ENCODE measurements at regions of chr14 and their contacts with region 1.

Region 1: GRCh38 chr14:57390028-57390805 is at the start of gene NAA30:
- DNase-seq: peak; percentile 96
- ATAC-seq: peak; percentile 95
- H3K4me3 ChIP-seq: peak within 1 kb of the TSS; percentile 71 to 97 (median 81)
- H3K4me3 Mint-ChIP-seq: peak within 1 kb of the TSS; percentile 88
- H3K27ac ChIP-seq: peak within 1 kb of the TSS; percentile 82 to 89
- H3K27ac Mint-ChIP-seq: peak within 1 kb of the TSS; percentile 87
- H3K4me1 ChIP-seq: peaks cover 19 to 28% of the 10 kb centered on the region in 2 donors
- H3K4me1 Mint-ChIP-seq: peaks cover 42% of the 10 kb centered on the region
- H3K27me3 ChIP-seq: no peaks in the 10 kb centered on the region
- H3K27me3 Mint-ChIP-seq: peaks cover 2% of the 10 kb centered on the region
- CTCF ChIP-seq: no peak
- total RNA-seq, gene NAA30: 13.3 and 14.7 TPM in 2 replicates

Region 2: GRCh38 chr14:55411426-55412389 is 1978.5 kb before region 1 on chr14 and contains the start of gene ATG14:
- CTCF ChIA-PET with region 1: no interaction called
- POLR2A ChIA-PET with region 1: no interaction called
- intact Hi-C with region 1: loop called (anchors 5 kb)
- DNase-seq: peak; percentile 81
- ATAC-seq: peak; percentile 99
- H3K4me3 ChIP-seq: peak within 1 kb of the TSS; percentile 62 to 95 (median 93)
- H3K4me3 Mint-ChIP-seq: peak within 1 kb of the TSS; percentile 93
- H3K27ac ChIP-seq: peak within 1 kb of the TSS; percentile 49 to 87
- H3K27ac Mint-ChIP-seq: peak within 1 kb of the TSS; percentile 87
- H3K4me1 ChIP-seq: peaks cover 16 to 17% of the 10 kb centered on the region in 2 donors
- H3K4me1 Mint-ChIP-seq: peaks cover 35% of the 10 kb centered on the region
- H3K27me3 ChIP-seq: no peaks in the 10 kb centered on the region
- H3K27me3 Mint-ChIP-seq: peaks cover 19% of the 10 kb centered on the region
- CTCF ChIP-seq: no peak
- total RNA-seq, gene ATG14: 15.5 and 17.0 TPM in 2 replicates

Region 3: DNA sequence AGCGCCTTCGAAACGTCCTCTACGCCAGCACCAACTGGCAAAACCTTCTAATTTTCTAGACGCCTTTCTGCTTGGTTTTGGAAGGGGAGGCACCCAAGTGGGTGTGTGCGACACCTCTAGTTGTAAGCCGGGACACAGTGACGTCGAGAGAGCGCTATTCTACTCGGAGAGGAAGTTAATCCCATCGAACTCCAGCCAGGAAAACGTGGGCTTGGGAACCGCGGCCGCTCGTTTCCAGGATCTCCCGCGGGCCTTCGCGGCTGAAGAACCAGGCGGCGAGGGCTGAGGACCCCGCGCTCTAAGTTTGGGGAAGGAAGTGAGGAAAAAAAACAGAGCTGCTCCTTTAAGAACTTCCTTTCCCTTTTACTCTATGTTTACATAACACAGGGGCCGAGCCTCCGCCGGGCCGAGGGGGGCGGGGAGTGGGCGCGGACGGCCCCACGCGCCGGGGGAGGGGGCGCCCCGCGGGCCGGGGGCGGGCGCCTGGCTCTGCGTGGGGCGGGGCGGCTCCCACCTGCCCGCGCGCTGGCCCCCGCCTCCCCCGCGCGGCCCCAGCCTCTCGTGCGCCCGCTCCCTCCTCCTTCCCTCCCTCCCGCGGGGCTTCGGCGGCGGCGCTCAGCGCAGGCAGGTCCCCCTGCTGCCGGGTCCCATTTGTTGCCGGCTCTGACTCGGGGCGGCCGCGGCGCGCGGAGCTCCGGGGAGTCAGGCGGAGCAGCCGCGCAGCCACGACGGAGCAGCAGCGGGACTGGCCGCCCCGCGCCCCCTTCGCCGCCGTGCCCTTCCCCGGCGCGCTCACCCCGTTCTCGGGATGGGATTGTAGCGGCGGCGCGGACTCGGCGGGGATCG is 1272.2 kb before region 1 on chr14 and contains the start of gene PELI2:
- CTCF ChIA-PET with region 1: no interaction called
- POLR2A ChIA-PET with region 1: no interaction called
- intact Hi-C with region 1: loop called (anchors 5 kb)
- DNase-seq: peak; percentile 93
- ATAC-seq: peak; percentile 89
- H3K4me3 ChIP-seq: peak within 1 kb of the TSS; percentile 60 to 93 (median 83)
- H3K4me3 Mint-ChIP-seq: peak within 1 kb of the TSS; percentile 96
- H3K27ac ChIP-seq: peak within 1 kb of the TSS; percentile 68 to 94
- H3K27ac Mint-ChIP-seq: peak within 1 kb of the TSS; percentile 98
- H3K4me1 ChIP-seq: peaks cover 18 to 31% of the 10 kb centered on the region in 2 donors
- H3K4me1 Mint-ChIP-seq: peaks cover 55% of the 10 kb centered on the region
- H3K27me3 ChIP-seq: peaks cover 0 to 4% (median 0%) of the 10 kb centered on the region in 4 experiments
- H3K27me3 Mint-ChIP-seq: peaks cover 3% of the 10 kb centered on the region
- CTCF ChIP-seq: no peak
- total RNA-seq, gene PELI2: 13.4 and 18.9 TPM in 2 replicates

Region 4: DNA sequence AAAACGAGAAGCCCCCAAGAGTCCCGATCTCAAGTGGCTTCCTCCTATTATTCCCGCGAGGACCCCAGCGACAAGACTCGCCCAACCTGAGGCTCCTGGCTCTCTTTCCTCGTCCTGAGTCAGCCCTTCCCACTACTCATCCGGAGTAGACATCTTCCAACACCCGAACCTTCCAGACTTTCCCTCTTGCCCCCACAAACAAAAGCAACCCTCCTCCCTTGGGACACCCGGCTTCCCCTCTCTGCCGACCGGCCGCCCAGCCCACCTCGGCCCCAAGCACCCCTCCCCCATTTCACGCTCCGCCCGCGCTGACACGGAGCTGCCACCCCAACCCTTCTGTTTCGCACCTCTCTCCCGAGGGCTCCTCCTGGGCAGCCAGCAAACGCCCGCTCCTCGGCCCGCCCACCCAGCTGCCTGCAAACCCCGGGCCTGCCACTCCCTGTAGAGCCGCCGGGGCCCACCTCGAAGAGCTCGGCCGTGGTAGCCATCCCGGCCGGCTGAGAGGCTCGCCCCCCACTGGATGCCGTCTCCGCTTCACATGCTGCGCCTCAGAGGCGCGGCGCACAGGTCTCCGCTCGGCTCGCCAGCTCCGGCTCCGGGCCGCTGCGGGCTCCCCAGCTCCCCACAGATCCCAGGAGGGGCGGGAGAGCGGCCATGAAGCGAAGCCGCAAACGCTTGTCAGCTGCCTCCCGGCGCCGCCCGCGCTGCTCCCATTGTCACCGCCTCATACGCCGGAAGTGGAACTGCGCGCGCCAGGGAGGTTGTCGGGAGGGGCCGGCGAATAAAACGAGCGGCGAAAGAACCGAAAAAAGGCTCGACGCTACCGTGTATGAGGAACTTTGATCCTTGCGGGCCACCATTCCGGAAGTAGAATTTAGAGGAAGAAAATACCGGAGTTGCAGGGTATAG is 121.8 kb before region 1 on chr14 and contains the starts of genes AP5M1 and EXOC5:
- CTCF ChIA-PET with region 1: interaction called, 3 read pairs
- POLR2A ChIA-PET with region 1: interaction called, 16 read pairs
- intact Hi-C with region 1: loop called (anchors 1 kb)
- DNase-seq: peak; percentile 96
- ATAC-seq: peak; percentile 79
- H3K4me3 ChIP-seq: peak within 1 kb of the TSS; percentile 77 to 98 (median 86)
- H3K4me3 Mint-ChIP-seq: peak within 1 kb of the TSS; percentile 100
- H3K27ac ChIP-seq: peak within 1 kb of the TSS; percentile 74 to 90
- H3K27ac Mint-ChIP-seq: peak within 1 kb of the TSS; percentile 100
- H3K4me1 ChIP-seq: peaks cover 20% of the 10 kb centered on the region in 2 donors
- H3K4me1 Mint-ChIP-seq: peaks cover 48% of the 10 kb centered on the region
- H3K27me3 ChIP-seq: no peaks in the 10 kb centered on the region
- H3K27me3 Mint-ChIP-seq: no peaks in the 10 kb centered on the region
- CTCF ChIP-seq: no peak
- total RNA-seq, gene AP5M1: 53.6 and 54.9 TPM in 2 replicates
- total RNA-seq, gene EXOC5: 56.6 and 60.0 TPM in 2 replicates

Region 5: DNA sequence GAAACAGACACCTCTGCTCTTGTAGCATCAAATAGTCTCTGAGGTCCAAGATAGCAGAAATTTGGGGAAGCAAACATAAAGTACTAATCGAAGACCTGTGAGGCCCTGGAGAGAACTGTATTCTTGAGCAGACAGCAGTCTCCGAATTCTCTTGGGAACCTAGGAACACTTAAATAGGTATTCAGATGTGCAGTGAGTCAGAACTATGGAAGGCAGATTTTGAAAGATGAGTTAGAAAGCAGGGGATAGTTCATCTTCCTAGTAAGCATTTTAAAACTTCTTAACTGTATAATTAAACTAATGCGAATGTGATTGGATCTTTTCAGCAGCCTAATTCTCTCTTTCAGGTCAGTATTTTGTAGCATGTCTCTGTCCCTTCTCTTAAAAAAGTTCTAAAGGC is 30.8 kb after region 1 on chr14:
- CTCF ChIA-PET with region 1: no interaction called
- POLR2A ChIA-PET with region 1: no interaction called
- intact Hi-C with region 1: no loop called
- DNase-seq: no peak
- ATAC-seq: no peak
- H3K4me3 ChIP-seq: no peak overlapping the region
- H3K4me3 Mint-ChIP-seq: no peak overlapping the region
- H3K27ac ChIP-seq: no peak overlapping the region
- H3K27ac Mint-ChIP-seq: no peak overlapping the region
- H3K4me1 ChIP-seq: no peaks in the 10 kb centered on the region
- H3K4me1 Mint-ChIP-seq: no peaks in the 10 kb centered on the region
- H3K27me3 ChIP-seq: no peaks in the 10 kb centered on the region
- H3K27me3 Mint-ChIP-seq: peaks cover 4% of the 10 kb centered on the region
- CTCF ChIP-seq: no peak

Region 6: DNA sequence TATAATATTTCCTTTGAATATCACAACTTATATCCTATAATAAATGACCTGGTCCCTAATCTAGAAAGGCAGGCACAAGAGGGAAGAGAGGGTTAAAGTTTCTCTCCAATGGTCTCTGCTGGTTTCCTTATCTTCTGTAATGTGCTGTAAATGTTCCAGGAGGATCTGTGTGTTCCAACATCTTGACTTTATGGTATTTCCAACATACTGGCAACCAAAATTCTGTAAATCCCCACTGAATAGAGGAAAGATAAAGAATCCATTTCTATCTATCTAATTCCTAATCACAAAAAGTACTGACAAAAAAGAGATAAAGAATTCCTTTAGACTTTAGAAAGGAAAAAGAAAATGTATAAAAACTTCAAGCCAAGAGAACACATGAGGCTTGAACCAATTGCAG is 249.8 kb after region 1 on chr14:
- CTCF ChIA-PET with region 1: no interaction called
- POLR2A ChIA-PET with region 1: no interaction called
- intact Hi-C with region 1: no loop called
- DNase-seq: no peak
- ATAC-seq: no peak
- H3K4me3 ChIP-seq: no peak overlapping the region
- H3K4me3 Mint-ChIP-seq: no peak overlapping the region
- H3K27ac ChIP-seq: no peak overlapping the region
- H3K27ac Mint-ChIP-seq: no peak overlapping the region
- H3K4me1 ChIP-seq: no peaks in the 10 kb centered on the region
- H3K4me1 Mint-ChIP-seq: no peaks in the 10 kb centered on the region
- H3K27me3 ChIP-seq: no peaks in the 10 kb centered on the region
- H3K27me3 Mint-ChIP-seq: no peaks in the 10 kb centered on the region
- CTCF ChIP-seq: no peak

Region 7: DNA sequence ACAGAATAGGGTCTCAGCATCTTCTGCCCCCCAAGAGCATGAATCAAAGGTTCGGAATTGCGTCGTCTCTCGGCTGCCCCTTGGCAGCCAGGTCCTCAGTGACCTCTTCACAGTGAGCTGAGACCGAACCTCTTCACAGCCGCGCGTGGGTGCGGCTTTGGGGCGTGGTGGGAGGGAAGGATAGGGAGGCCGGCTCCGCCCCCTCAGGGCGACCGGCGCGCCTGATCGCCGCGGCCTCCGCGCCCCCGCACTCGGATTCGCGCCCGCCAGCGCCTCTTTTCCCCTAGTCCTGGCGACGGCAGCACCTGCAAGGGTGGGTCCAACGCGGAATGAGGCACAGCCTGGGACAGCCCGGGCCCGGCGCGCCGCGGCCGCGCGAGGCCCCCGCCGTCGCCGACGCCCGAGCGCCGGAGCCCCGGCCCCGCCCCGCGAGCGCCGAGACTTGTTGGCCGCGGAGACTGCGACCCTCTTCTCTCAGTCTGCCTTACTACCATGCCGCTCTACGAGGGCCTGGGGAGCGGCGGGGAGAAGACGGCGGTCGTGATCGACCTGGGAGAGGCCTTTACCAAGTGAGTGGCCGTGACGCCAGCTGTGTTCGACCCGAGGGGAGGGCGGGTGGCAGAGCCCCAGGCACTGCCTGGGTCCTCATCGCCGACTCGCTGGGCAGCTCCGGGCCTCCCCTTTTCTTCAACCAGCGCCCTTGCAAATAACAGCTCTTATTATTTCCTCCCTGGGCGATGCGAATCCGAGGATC is 809.7 kb after region 1 on chr14 and contains the start of gene ACTR10:
- CTCF ChIA-PET with region 1: no interaction called
- POLR2A ChIA-PET with region 1: no interaction called
- intact Hi-C with region 1: loop called (anchors 5 kb)
- DNase-seq: peak; percentile 95
- ATAC-seq: peak; percentile 89
- H3K4me3 ChIP-seq: peak within 1 kb of the TSS; percentile 71 to 88 (median 79)
- H3K4me3 Mint-ChIP-seq: peak within 1 kb of the TSS; percentile 95
- H3K27ac ChIP-seq: peak within 1 kb of the TSS; percentile 70 to 96
- H3K27ac Mint-ChIP-seq: peak within 1 kb of the TSS; percentile 96
- H3K4me1 ChIP-seq: peaks cover 15 to 17% of the 10 kb centered on the region in 2 donors
- H3K4me1 Mint-ChIP-seq: peaks cover 28% of the 10 kb centered on the region
- H3K27me3 ChIP-seq: peaks cover 0 to 3% (median 1%) of the 10 kb centered on the region in 4 experiments
- H3K27me3 Mint-ChIP-seq: no peaks in the 10 kb centered on the region
- CTCF ChIP-seq: no peak
- total RNA-seq, gene ACTR10: 34.1 and 40.6 TPM in 2 replicates